ENCODE measurements at regions of chr11 and their contacts with region 1.

Region 1: DNA sequence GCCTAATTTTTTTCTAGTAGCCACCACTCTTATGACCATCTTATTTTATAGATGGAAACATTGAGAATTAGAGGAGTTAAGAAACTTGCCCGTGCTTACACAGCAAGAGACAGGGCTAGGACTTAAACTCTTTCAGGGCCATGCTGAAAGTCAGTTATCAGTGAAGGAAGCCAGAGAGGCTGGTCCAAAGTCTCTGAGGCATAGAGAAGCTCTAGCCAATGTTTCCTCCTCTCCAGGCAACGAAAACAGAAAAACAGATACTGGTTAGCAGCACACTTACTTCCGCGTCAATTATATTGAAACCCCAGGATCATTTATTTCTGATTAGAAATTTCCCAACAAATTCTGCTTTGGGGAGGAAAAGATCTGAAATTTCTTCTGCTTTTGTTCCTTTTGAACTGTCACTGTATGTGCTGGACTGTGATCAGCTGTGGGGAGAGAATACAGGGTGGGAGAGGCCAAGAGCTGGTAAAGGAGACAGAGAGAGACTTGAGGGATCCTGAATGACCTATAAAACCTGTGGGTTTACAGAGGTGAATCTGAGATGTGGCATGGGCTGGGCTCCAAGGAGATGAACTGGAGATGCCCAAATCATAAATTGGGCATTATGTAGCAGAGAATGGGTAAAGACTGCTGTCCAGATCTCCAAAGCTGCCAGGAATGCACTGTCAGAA is 37.5 kb upstream of the CAPRIN1 start:
- DNase-seq: no peak

Region 2: GRCh38 chr11:35927730-35928129 is 1913.7 kb after region 1 on chr11:
- intact Hi-C with region 1: loop called in 1 of 2 experiments (anchors 10 kb)
- DNase-seq: peak; percentile 84

Measured in posterior vena cava (tissue), 2 donors.